Activated CD4-positive, alpha-beta T cell treated with anti-CD3 and anti-CD28 coated beads for 36 hours (primary cell): ENCODE measurements at regions of chr19 and their contacts with region 1.

Region 1: GRCh38 chr19:18636183-18636968 is 452 bp upstream of the KLHL26 start:
- DNase-seq: peak; percentile 100
- ATAC-seq: peak; percentile 92
- H3K4me3 Mint-ChIP-seq: peak overlapping the region; percentile 84
- H3K27ac Mint-ChIP-seq: peak overlapping the region; percentile 78
- H3K4me1 Mint-ChIP-seq: peaks cover 24% of the 10 kb centered on the region
- H3K27me3 Mint-ChIP-seq: no peaks in the 10 kb centered on the region

Region 2: GRCh38 chr19:18322759-18323460 is 313.5 kb before region 1 on chr19 and contains the start of gene LSM4:
- CTCF ChIA-PET with region 1: no interaction called
- POLR2A ChIA-PET with region 1: no interaction called
- intact Hi-C with region 1: loop called in 1 of 2 experiments (anchors 2 kb)
- DNase-seq: peak; percentile 100
- ATAC-seq: peak; percentile 94
- H3K4me3 Mint-ChIP-seq: peak within 1 kb of the TSS; percentile 90
- H3K27ac Mint-ChIP-seq: peak within 1 kb of the TSS; percentile 98
- H3K4me1 Mint-ChIP-seq: peaks cover 54% of the 10 kb centered on the region
- H3K27me3 Mint-ChIP-seq: no peaks in the 10 kb centered on the region
- total RNA-seq, gene LSM4: 269 to 370 TPM

Region 3: DNA sequence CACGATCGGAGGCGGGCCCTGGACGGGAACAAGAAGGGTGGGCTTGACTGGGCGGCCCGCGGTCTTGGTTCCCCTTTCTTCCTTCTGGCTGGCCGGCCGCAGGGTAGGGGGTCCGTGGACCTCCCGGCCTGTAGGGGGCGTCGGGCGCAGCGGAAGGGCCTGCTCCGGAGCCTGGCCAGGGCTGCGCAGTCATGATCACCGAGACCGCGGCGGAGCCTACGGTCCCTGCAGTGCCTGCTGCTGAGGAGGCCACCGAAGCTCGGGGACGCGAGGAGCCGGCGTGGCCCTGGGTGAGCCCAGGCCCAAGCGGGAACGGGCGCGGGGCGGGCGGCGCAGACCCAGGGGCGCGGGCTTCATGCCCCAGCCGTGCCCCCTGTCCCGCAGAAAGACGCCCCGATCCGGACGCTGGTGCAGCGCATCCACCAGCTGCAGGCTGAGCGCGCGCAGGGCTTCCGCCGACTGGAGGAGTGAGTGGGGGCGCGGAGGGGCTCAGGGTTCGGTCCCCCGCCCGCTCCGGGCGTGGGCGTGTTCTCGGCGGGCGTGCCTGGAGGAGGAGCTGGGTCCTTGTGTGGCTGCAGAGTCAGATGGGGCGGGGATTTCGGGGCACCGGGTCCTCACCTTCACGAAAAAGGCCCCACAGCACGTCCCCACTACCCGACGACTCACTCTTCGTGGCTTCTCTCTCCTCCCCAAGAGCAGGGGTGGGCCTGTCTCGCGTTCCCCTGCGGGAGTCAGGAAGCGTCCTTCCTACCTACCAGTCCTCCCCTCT is 47.6 kb before region 1 on chr19 and contains the start of gene REX1BD:
- CTCF ChIA-PET with region 1: no interaction called
- POLR2A ChIA-PET with region 1: no interaction called
- intact Hi-C with region 1: loop called in 1 of 2 experiments (anchors 1 kb)
- DNase-seq: peak; percentile 91
- ATAC-seq: peak; percentile 81
- H3K4me3 Mint-ChIP-seq: peak within 1 kb of the TSS; percentile 90
- H3K27ac Mint-ChIP-seq: peak within 1 kb of the TSS; percentile 92
- H3K4me1 Mint-ChIP-seq: peaks cover 31% of the 10 kb centered on the region
- H3K27me3 Mint-ChIP-seq: no peaks in the 10 kb centered on the region
- total RNA-seq, gene REX1BD: 47.8 to 81.3 TPM

Region 4: GRCh38 chr19:18612772-18613588 is 23.4 kb before region 1 on chr19 and contains the start of gene TMEM59L:
- CTCF ChIA-PET with region 1: no interaction called
- POLR2A ChIA-PET with region 1: no interaction called
- intact Hi-C with region 1: no loop called
- DNase-seq: peak; percentile 70
- ATAC-seq: peak; percentile 53
- H3K4me3 Mint-ChIP-seq: peak within 1 kb of the TSS; percentile 57
- H3K27ac Mint-ChIP-seq: no peak within 1 kb of the TSS
- H3K4me1 Mint-ChIP-seq: peaks cover 16% of the 10 kb centered on the region
- H3K27me3 Mint-ChIP-seq: peaks cover 64% of the 10 kb centered on the region
- total RNA-seq, gene TMEM59L: 0.11 TPM in 1 of 2 experiments, not detected in the other

Region 5: DNA sequence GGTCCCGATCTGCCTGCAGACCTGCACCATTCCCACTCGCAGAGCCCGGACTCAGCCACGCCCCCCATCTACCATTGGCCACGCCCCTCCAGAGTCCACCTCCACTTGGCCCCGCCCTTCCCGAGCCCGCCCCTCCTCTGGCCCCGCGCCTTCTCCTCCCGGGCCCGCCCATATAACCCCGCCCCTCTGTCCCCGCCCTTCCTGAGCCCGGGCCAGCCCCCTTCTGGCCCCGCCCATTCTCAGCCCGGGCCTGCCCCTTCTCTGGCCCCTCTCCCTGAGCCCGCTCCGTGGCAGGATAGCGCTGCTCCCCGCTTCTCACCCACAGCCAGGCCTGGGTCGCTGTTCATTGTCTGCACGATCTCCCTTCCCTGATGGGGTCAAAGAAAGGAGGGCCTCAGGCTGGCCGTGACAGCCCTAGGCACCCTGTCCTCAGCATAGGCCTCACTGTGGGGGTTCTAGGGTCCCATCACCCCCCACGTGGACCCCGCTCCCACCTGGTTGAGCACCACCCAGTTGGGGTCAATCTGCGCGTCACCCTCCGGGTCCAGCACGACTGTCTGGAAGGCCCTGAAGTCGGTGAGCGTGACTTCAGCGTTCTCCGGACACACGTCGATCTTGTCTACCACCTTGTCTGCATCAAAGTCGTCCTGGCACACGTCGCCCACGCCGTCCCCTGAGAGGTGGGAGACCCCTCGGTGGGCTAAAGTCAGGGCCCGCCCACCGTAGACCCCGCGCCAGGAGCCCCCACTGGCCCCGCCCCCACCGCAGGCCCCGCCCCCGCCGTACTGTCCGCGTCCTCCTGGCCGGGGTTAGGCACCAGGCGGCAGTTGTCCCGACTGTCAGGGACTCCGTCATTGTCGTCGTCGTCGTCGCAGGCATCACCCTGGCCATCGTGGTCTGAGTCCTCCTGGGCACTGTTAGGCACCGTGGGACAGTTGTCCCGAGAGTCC is 149.1 kb after region 1 on chr19:
- CTCF ChIA-PET with region 1: no interaction called
- POLR2A ChIA-PET with region 1: no interaction called
- intact Hi-C with region 1: loop called in 1 of 2 experiments (anchors 1 kb)
- DNase-seq: peak; percentile 90
- ATAC-seq: peak; percentile 88
- H3K4me3 Mint-ChIP-seq: no peak overlapping the region
- H3K27ac Mint-ChIP-seq: no peak overlapping the region
- H3K4me1 Mint-ChIP-seq: peaks cover 31% of the 10 kb centered on the region
- H3K27me3 Mint-ChIP-seq: peaks cover 46% of the 10 kb centered on the region

Region 6: DNA sequence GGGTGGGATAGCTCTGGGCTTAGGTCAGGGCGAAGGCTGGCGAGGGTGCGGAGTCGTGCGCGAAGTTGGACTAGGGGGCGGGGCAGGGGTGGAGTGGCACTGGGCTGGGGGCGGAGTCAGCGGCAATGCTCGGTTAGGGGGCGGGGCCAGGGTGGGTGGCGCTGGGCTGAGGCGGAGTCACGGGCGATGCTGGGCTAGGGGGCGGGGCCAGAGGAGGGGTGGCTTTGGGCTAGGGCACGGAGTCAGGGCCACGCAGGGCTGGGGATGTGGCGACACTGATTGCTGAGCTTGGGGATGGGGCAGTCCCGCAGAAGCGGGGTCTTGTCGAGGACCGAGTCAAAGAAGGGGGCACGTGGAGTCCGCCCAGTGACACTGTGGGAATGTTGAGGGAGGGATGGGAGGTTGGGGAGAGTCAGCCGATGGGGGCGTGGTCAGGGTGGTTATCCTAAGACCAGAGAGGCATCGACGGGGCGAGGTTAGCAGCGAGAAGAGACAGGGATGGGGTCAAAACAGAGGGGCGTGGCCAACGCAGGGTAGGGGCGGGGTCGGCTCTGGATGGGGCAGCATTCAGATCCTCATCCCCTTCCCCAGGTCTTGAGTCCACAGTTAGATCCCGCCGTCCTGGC is 296.0 kb after region 1 on chr19:
- CTCF ChIA-PET with region 1: no interaction called
- POLR2A ChIA-PET with region 1: no interaction called
- intact Hi-C with region 1: loop called in 1 of 2 experiments (anchors 1 kb)
- DNase-seq: peak; percentile 95
- ATAC-seq: peak; percentile 98
- H3K4me3 Mint-ChIP-seq: peak overlapping the region; percentile 53
- H3K27ac Mint-ChIP-seq: no peak overlapping the region
- H3K4me1 Mint-ChIP-seq: peaks cover 6% of the 10 kb centered on the region
- H3K27me3 Mint-ChIP-seq: peaks cover 1% of the 10 kb centered on the region

Region 7: GRCh38 chr19:19098703-19099632 is 462.6 kb after region 1 on chr19:
- CTCF ChIA-PET with region 1: no interaction called
- POLR2A ChIA-PET with region 1: no interaction called
- intact Hi-C with region 1: no loop called
- DNase-seq: no peak
- ATAC-seq: no peak
- H3K4me3 Mint-ChIP-seq: no peak overlapping the region
- H3K27ac Mint-ChIP-seq: no peak overlapping the region
- H3K4me1 Mint-ChIP-seq: no peaks in the 10 kb centered on the region
- H3K27me3 Mint-ChIP-seq: no peaks in the 10 kb centered on the region

Region 8: GRCh38 chr19:19192078-19192882 is 555.9 kb after region 1 on chr19 and contains the starts of genes BORCS8 and RFXANK:
- CTCF ChIA-PET with region 1: no interaction called
- POLR2A ChIA-PET with region 1: no interaction called
- intact Hi-C with region 1: loop called in 1 of 2 experiments (anchors 1 kb)
- DNase-seq: peak; percentile 99
- ATAC-seq: peak; percentile 92
- H3K4me3 Mint-ChIP-seq: peak within 1 kb of the TSS; percentile 91
- H3K27ac Mint-ChIP-seq: peak within 1 kb of the TSS; percentile 94
- H3K4me1 Mint-ChIP-seq: peaks cover 41% of the 10 kb centered on the region
- H3K27me3 Mint-ChIP-seq: no peaks in the 10 kb centered on the region
- total RNA-seq, gene BORCS8: 19.5 to 25.3 TPM
- total RNA-seq, gene RFXANK: 56.2 to 68.5 TPM